Ovary (tissue), 10 donors: ENCODE measurements at regions of chr11 and their contacts with region 1.

Region 1: DNA sequence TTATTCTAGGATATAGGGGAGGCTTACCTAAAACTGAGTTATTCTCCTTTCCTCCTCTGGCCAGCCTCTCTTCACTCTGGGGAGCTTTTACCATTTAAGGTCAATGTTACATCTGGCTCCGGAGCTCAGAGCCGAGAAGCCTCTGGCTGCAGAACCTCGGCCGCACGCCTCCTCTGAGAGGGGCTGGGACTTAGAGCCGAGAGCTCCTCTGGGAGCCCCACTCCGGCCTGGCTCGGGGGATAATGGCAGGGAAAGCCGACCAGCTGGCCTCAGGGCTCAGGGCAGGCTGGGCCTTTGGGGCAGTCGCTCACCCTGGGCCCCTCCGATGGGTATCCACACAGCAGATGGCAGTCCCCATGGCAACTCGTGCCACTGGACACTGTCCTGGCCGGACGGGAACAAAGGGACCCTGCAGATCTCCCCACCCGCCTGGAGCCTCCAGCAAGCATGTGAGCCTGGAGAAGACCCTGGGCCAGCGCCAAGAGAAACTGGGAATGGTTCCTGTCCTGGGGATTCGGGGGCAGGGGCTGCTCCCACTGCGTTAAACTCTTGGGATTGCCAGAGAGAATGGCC is at the start of gene IRAG1:
- DNase-seq: peak; percentile 64 to 79 (median 70)
- H3K4me3 ChIP-seq: peak within 1 kb of the TSS; percentile 52
- H3K27ac ChIP-seq: peak within 1 kb of the TSS; percentile 73
- H3K4me1 ChIP-seq: peaks cover 5% of the 10 kb centered on the region
- H3K27me3 ChIP-seq: no peaks in the 10 kb centered on the region
- CTCF ChIP-seq: no peak
- EP300 ChIP-seq: no peak
- POLR2A ChIP-seq: no peak
- total RNA-seq, gene IRAG1: 5.8 to 89.5 (median 29.8) TPM

Region 2: DNA sequence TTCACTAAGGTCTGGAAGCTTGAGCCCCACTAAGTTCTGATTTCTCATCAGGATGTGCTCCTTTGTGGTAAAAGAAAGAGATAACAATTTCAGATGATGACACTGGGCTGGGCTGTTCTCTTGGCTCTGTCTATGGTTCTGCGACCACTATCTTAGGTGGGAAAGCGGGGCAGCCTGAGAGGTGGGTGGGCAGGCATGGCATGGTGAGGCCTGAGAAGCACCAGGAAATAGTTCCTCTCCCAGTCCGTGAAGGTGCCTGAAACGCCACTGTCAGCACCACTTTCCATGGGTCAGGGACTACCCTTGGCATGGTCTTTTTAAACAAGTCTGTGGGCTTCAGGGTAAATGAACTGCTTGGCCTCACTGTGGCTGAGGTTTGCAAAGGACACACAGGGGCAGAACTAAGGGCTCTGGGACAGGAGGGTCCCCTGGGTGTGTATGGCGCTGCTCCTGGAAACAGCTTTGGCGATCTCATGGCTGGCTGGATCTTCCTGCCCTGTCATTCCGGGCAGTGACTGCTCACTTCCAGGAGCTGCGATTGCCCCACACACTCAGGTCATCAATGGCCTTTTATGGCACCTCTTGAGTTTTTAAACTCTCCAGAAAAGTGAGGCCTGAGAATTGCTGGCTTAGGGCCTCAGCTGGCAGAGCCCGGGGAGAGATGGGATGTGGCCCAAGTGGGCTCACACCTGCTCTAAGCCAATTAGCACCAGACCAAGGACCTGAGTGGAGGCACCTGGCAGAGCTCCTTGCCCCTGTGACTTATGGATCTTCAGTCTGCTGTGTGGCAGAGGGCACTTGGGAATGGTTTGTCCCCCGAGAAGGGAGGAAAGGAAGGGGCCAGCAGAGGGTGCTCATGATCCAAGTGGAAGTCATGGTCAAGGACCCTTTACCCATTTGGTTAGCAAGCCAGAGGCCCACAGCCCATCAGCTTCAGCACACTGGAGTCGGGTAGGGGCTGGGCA is 69.5 kb before region 1 on chr11:
- intact Hi-C with region 1: loop called in 1 of 4 experiments (anchors 10 kb)
- DNase-seq: peak; percentile 30 to 56 (median 52)
- H3K4me3 ChIP-seq: no peak overlapping the region
- H3K27ac ChIP-seq: no peak overlapping the region
- H3K4me1 ChIP-seq: peaks cover 3% of the 10 kb centered on the region
- H3K27me3 ChIP-seq: no peaks in the 10 kb centered on the region
- CTCF ChIP-seq: peak in 1 of 3 donors; percentile 23
- EP300 ChIP-seq: peak; percentile 30
- POLR2A ChIP-seq: no peak

Region 3: DNA sequence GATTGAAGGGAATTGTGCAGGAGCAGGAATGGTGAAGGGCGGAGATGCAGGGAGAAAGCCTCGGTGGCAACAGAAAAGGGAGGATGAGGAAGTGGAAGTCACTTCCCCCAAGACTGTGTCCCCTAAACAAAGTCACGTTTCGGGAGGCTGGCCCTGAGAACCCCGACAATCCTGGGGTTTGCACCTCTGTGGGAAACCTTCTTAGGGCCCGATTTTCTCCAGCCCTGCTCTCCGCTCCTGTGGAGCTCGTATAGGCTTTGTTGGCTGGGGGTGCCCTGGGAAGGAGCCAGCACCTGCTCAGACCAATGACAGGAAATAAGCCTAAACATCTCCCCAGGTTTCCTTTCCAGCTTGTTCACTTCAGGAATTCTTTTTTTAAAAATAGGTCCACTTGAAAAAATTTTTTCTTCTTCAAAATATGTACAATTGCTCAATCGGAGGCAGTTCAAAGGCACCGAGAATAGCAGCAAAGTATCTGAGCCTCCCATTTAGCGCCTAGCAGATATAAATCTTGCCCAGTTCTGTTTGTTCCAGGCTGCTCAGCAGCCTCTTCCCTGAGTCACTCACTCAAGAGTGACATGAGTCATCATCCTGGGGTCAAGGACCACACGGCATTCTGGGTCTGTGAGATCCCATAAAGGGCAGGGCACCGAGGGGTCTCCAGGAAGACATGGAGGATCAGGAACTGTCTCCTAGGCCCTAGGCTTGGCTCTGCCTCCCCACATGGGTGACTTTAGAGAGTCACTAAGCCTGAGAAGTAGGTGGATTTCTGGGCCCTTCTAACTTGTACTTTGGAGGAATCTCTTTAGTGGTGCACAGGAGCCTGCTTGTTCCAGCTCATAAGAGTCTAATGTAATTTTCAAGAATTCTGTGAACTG is 34.0 kb before region 1 on chr11:
- intact Hi-C with region 1: no loop called
- DNase-seq: peak in 3 of 5 donors; percentile 58 to 65 (median 58)
- H3K4me3 ChIP-seq: no peak overlapping the region
- H3K27ac ChIP-seq: peak overlapping the region; percentile 57
- H3K4me1 ChIP-seq: peaks cover 31% of the 10 kb centered on the region
- H3K27me3 ChIP-seq: no peaks in the 10 kb centered on the region
- CTCF ChIP-seq: no peak
- EP300 ChIP-seq: no peak
- POLR2A ChIP-seq: no peak

Region 4: DNA sequence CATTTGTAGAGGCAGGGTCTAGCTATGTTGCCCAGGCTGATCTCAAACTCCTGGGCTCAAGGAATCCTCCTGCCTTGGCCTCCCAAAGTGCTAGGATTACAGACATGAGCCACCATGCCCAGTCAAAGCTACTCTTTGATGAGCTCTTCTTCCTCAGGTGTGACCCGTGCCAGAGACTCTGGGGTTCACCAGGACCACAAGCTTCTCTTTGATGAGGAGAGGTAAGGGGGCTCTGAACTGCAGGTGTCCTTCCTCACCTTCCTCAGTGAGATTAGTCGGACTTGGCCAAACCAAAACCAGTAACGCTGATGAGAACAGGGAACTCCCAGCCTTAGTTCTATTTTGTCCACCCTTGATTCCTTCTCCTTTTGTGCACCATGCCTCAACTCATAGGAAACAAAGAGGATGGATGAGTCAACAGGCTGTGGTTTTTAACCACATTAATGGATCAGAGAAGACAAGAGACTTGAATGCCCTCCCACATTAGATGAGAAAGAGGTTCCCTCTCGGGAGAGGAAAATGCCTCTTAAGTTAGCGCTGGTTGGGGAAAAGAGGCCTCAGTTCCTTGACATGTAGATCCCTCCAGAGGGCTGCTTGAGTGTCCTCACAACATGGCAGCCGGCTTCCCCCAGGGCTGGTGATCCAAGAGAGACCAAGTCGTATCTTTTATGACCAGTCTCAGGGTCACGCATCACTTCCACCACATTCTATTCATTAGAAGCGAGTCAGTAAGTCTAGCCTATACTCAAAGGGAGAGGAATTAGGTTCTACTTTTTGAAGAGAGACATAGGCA is 31.7 kb after region 1 on chr11:
- intact Hi-C with region 1: loop called in 1 of 4 experiments (anchors 5 kb)
- DNase-seq: no peak
- H3K4me3 ChIP-seq: no peak overlapping the region
- H3K27ac ChIP-seq: no peak overlapping the region
- H3K4me1 ChIP-seq: peaks cover 3% of the 10 kb centered on the region
- H3K27me3 ChIP-seq: no peaks in the 10 kb centered on the region
- CTCF ChIP-seq: no peak
- EP300 ChIP-seq: no peak
- POLR2A ChIP-seq: no peak